HAP-1 (cell line): ENCODE measurements at regions of chr4 and their contacts with region 1.

Region 1: GRCh38 chr4:165345666-165346417 is 18.4 kb downstream of the MSMO1 start:
- DNase-seq: no peak
- H3K4me3 ChIP-seq: no peak overlapping the region
- H3K4me1 ChIP-seq: no peaks in the 10 kb centered on the region
- H3K27me3 ChIP-seq: no peaks in the 10 kb centered on the region

Region 2: DNA sequence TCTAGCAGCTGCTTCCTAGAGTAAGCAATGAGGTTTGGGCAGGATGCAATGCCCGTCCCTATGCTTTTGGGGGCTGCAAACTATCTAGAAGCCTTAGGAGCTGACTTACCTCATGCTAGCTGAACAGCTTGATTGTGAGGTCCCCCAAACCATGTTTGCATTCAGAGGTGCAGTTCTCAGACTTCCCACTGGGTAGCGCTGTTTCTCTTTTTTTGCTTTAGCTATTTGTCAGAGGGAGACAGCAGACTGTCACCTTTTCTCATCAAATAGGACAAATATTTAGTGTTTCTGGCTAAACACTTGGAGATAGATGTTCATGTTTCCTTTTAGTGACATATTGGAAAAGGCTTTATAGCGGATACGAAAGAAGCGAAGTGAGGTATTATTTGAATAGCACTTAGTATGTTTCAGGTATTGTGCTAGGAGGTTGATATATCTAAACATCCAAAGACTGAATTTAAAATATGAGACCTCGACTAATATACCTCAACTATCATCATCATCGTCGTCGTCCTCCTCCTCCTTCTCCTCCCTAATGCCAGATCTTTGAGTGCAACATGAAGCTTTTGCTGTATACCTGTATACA is 214.5 kb before region 1 on chr4:
- in situ Hi-C with region 1: loop called (anchors 5 kb)
- DNase-seq: peak; percentile 42 to 86
- H3K4me3 ChIP-seq: no peak overlapping the region
- H3K4me1 ChIP-seq: no peaks in the 10 kb centered on the region
- H3K27me3 ChIP-seq: peaks cover 4% of the 10 kb centered on the region; the same call in 1 of the 2 replicates